ENCODE measurements at regions of chr14 and their contacts with region 1.

Region 1: GRCh38 chr14:59507063-59507780 is 22.9 kb downstream of the JKAMP start:
- DNase-seq: peak; percentile 53
- ATAC-seq: peak; percentile 98
- H3K4me3 ChIP-seq: no peak overlapping the region
- H3K27ac ChIP-seq: no peak overlapping the region
- H3K4me1 ChIP-seq: no peaks in the 10 kb centered on the region
- H3K27me3 ChIP-seq: no peaks in the 10 kb centered on the region
- CTCF ChIP-seq: peak; percentile 89
- POLR2A ChIP-seq: no peak
- RAD21 ChIP-seq: peak; percentile 81

Region 2: DNA sequence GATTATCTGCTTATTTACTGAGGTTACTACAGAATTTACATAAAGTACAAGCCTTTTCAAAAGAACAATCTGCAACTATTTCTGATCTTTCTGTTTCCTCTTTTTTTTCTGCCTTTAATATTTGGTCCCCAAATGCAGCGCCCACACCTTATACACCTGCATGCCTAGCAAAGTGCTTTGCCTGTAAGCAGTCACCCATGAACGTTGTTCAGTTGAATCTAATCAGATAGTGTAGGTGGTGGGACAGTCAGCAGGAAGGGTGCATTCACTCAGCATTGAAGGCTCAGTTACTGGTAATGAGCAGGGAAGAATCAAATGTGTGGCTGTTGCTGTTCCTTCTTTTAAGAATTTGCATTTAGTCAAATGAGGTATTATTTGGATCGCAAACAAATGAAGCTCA is 150.5 kb before region 1 on chr14:
- CTCF ChIA-PET with region 1: no interaction called
- POLR2A ChIA-PET with region 1: no interaction called
- dilution Hi-C with region 1: no loop called
- in situ Hi-C with region 1: no loop called
- intact Hi-C with region 1: no loop called
- DNase-seq: no peak
- ATAC-seq: no peak
- H3K4me3 ChIP-seq: no peak overlapping the region
- H3K27ac ChIP-seq: no peak overlapping the region
- H3K4me1 ChIP-seq: peaks cover 13% of the 10 kb centered on the region
- H3K27me3 ChIP-seq: no peaks in the 10 kb centered on the region
- CTCF ChIP-seq: no peak
- POLR2A ChIP-seq: no peak
- RAD21 ChIP-seq: no peak

Region 3: DNA sequence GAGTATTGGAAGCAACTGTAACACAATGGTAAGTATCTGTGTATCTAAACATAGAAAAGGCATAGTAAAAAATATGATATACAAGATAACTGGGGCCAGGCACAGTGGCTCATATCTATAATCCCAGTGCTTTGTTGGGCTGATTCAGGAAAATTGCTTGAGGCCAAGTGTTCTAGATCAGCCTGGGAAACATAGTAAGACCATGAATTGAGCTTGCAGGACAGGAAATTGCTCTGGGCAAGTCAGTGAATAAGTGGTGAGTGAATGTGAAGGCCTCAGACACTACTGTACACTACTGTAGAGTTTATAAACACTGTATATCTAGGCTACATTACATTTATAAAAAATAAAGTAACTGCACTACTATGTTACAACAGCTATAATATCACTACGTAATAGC is 117.3 kb before region 1 on chr14:
- CTCF ChIA-PET with region 1: no interaction called
- POLR2A ChIA-PET with region 1: no interaction called
- dilution Hi-C with region 1: no loop called
- in situ Hi-C with region 1: no loop called
- intact Hi-C with region 1: no loop called
- DNase-seq: peak; percentile 25
- ATAC-seq: no peak
- H3K4me3 ChIP-seq: no peak overlapping the region
- H3K27ac ChIP-seq: no peak overlapping the region
- H3K4me1 ChIP-seq: no peaks in the 10 kb centered on the region
- H3K27me3 ChIP-seq: no peaks in the 10 kb centered on the region
- CTCF ChIP-seq: no peak
- POLR2A ChIP-seq: no peak
- RAD21 ChIP-seq: no peak

Region 4: DNA sequence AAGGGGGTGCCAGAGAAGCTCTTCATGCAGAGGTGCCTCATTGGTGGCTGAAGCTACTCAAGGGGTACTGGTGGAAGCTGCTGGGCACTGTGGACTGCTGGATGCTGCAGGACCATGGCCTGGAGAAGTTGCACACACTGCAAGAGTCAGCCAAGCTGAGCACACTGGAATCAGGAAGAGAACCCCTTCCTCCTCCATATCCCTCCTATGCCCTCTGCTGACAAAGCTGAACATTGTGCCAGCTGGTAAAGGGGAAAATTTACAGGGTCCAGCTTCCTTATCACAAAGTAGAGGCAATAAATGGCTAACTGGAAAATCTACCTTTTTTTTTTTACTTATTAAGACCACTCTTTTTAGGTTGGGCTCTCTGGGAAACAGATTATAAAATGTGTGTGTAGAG is 62.9 kb after region 1 on chr14:
- CTCF ChIA-PET with region 1: interaction called, 19 read pairs
- POLR2A ChIA-PET with region 1: no interaction called
- dilution Hi-C with region 1: no loop called
- in situ Hi-C with region 1: loop called (anchors 5 kb)
- intact Hi-C with region 1: no loop called
- DNase-seq: no peak
- ATAC-seq: peak; percentile 40; the same call in 1 of the 2 replicates
- H3K4me3 ChIP-seq: no peak overlapping the region
- H3K27ac ChIP-seq: no peak overlapping the region
- H3K4me1 ChIP-seq: no peaks in the 10 kb centered on the region
- H3K27me3 ChIP-seq: peaks cover 4% of the 10 kb centered on the region
- CTCF ChIP-seq: peak; percentile 21; the same call in 1 of the 2 replicates
- POLR2A ChIP-seq: no peak
- RAD21 ChIP-seq: no peak; the same call in 1 of the 2 replicates

Region 5: DNA sequence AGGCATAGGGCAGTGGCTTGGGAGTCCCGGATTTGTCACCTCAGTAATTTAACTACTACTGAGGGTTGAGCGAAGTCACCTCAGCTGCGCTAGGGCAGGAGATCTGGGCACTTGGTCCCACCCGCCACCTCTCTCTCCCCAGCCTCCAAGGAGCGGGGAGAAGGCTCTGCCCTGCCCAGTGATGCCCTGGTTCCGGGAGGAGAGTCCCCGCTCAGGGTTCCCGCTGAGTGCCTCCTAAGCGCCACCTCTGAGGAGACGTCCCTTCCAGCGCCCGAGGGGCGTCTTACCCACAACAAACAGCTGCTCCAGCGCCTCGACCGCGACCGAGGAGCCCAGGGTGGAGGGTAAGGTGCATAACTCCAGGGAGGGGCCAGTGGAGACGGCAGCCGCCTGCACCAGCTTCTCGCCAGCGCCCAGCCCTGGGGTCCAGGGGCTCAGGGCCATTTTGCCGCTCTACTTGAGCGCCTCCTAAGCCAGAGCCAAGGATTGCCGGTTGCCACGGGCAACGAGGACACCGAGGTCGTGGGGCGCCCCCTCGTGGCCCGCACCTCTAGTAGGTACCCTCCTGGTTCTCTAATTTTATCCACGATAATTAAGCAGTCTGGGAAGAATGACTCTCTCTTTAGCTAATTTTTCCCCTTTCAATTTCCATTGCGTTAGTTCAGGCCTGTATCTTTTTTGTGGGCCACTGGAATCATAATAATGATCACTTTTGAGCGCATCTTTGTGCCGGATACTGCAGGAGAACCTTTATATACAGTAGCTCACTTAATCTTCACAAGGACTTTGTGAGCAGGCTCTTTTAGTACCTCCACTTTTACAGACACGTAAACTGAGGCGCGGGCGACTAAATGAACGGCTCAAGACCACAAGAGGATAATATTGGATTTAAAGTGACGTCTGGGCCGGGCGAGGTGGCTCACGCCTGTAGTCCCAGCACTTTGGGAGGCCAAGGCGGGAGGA is 69.4 kb after region 1 on chr14 and contains the start of gene CCDC175:
- CTCF ChIA-PET with region 1: interaction called, 19 read pairs
- POLR2A ChIA-PET with region 1: no interaction called
- dilution Hi-C with region 1: no loop called
- in situ Hi-C with region 1: loop called (anchors 5 kb)
- intact Hi-C with region 1: loop called (anchors 1 kb)
- DNase-seq: peak; percentile 71
- ATAC-seq: peak; percentile 98
- H3K4me3 ChIP-seq: peak within 1 kb of the TSS; percentile 37
- H3K27ac ChIP-seq: no peak within 1 kb of the TSS
- H3K4me1 ChIP-seq: no peaks in the 10 kb centered on the region
- H3K27me3 ChIP-seq: peaks cover 10% of the 10 kb centered on the region
- CTCF ChIP-seq: peak; percentile 88
- POLR2A ChIP-seq: no peak
- RAD21 ChIP-seq: peak; percentile 76
- total RNA-seq, gene CCDC175: not detected in 2 replicates

Region 6: GRCh38 chr14:59688224-59689170 is 181.3 kb after region 1 on chr14:
- CTCF ChIA-PET with region 1: no interaction called
- POLR2A ChIA-PET with region 1: no interaction called
- dilution Hi-C with region 1: no loop called
- in situ Hi-C with region 1: no loop called
- intact Hi-C with region 1: loop called (anchors 1 kb)
- DNase-seq: peak; percentile 53
- ATAC-seq: peak; percentile 98
- H3K4me3 ChIP-seq: no peak overlapping the region
- H3K27ac ChIP-seq: no peak overlapping the region
- H3K4me1 ChIP-seq: no peaks in the 10 kb centered on the region
- H3K27me3 ChIP-seq: no peaks in the 10 kb centered on the region
- CTCF ChIP-seq: peak; percentile 56
- POLR2A ChIP-seq: no peak
- RAD21 ChIP-seq: peak; percentile 57

Region 7: DNA sequence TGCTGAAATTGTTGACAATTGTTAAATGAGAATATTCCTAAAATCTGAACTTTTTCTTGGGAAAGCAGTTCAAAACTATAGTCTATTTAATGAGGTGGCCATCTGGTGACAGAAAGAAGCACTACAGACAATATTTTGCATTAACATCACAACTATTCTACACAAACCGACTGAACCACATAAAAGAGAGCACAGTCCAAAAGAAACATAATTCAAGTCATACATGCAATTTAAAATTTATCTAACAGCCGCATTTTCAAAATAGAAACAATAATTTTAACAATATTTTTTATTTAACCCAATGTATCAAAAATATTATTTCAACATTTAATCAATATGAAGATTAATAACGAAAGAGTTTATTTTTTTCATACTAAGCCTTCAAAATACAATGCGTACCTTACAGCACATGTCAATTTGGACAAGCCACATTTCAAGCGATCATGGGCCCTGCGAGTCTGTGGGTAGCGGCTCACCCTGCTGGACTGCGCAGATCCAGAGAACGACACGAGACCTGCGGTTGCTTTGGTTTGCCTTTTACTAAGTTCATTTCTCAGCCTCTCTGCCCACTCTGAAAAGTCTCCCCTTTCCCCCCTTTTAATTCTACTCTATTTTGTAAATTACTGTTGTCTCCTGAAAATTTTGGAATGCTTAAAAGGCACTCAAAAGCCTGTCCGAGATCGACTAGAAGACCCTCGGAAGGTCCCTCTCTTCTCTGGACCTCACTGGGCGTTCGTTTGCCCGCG is 411.8 kb after region 1 on chr14:
- CTCF ChIA-PET with region 1: no interaction called
- POLR2A ChIA-PET with region 1: no interaction called
- dilution Hi-C with region 1: no loop called
- in situ Hi-C with region 1: no loop called
- intact Hi-C with region 1: loop called (anchors 1 kb)
- DNase-seq: peak; percentile 18
- ATAC-seq: peak; percentile 85
- H3K4me3 ChIP-seq: peak overlapping the region; percentile 24; the same call in 1 of the 2 replicates
- H3K27ac ChIP-seq: no peak overlapping the region
- H3K4me1 ChIP-seq: no peaks in the 10 kb centered on the region; the same call in 1 of the 2 replicates
- H3K27me3 ChIP-seq: peaks cover 21% of the 10 kb centered on the region
- CTCF ChIP-seq: peak; percentile 44
- POLR2A ChIP-seq: no peak
- RAD21 ChIP-seq: peak; percentile 24; the same call in 1 of the 2 replicates

Measured in IMR-90 (cell line).